ENCODE measurements at regions of chr5 and their contacts with region 1.

Region 1: GRCh38 chr5:115544436-115545350 is at the start of gene FEM1C:
- DNase-seq: peak; percentile 85
- H3K4me3 ChIP-seq: peak within 1 kb of the TSS; percentile 79
- H3K27me3 ChIP-seq: no peaks in the 10 kb centered on the region
- CTCF ChIP-seq: no peak
- polyA plus RNA-seq, gene FEM1C: 4.5 and 9.3 TPM in 2 replicates

Region 2: DNA sequence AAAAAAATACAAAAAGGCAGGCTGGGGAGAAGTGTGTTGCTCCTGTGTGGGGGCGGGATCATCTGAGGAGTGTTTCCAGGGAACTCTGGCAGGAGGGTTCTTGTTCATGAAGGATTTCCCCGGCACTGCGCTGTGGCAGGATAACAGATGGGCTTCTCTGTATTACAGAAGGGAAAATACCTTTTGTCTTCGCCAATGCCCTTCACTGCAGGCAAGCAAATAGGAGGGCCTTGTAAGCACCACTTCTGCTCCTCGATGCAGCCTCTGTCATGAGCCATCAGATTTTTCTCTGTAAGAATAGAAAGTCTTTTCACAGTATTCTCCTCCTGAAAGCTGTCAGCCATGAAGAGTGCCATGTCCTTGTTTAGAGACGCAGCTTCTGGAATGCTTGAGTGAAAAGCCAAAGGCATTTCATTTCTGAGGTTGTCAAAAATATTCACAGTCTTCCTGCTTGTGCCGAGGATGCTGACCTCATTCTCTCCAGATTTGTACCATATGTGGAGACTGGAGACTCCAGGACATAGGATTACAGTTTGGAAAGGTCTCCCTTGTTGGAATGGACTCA is 1737.2 kb before region 1 on chr5:
- CTCF ChIA-PET with region 1: no interaction called
- POLR2A ChIA-PET with region 1: interaction called, 11 read pairs
- DNase-seq: peak; percentile 40
- H3K4me3 ChIP-seq: no peak overlapping the region
- H3K27me3 ChIP-seq: no peaks in the 10 kb centered on the region
- CTCF ChIP-seq: no peak